MCF 10A (cell line): ENCODE measurements at regions of chr11 and their contacts with region 1.

Region 1: DNA sequence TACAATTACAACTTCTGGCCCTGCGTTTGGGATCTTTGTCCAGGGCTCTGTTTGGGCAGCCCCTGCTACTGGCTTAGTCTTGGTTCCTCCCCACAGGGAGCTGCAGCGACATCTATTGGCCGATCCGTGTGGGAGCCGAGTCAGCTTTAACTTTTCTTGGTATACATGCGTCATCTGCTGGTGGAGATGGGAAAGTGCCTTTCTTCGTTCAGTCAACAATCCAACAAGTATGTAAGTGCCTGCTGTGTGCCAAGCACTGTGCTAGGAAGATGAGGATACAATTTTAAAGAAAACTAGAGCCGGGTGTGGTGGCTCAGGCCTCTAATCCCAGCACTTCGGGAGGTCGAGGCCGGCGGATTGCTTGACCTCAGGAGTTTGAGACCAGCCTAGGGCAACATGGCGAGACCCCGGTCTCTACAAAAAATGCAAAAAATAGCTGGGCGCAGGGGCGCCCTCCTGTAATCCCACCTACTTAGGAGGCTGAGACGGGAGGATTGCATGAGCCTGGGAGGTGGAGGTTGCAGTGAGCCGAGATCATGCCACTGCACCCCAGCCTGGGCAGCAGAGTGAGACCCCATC is 8.2 kb downstream of the TPBGL start:
- DNase-seq: peak; percentile 86
- H3K4me3 Mint-ChIP-seq: no peak overlapping the region
- H3K27ac Mint-ChIP-seq: no peak overlapping the region
- H3K4me1 Mint-ChIP-seq: no peaks in the 10 kb centered on the region
- H3K27me3 Mint-ChIP-seq: peaks cover 67% of the 10 kb centered on the region
- CTCF ChIP-seq: peak; percentile 99

Region 2: DNA sequence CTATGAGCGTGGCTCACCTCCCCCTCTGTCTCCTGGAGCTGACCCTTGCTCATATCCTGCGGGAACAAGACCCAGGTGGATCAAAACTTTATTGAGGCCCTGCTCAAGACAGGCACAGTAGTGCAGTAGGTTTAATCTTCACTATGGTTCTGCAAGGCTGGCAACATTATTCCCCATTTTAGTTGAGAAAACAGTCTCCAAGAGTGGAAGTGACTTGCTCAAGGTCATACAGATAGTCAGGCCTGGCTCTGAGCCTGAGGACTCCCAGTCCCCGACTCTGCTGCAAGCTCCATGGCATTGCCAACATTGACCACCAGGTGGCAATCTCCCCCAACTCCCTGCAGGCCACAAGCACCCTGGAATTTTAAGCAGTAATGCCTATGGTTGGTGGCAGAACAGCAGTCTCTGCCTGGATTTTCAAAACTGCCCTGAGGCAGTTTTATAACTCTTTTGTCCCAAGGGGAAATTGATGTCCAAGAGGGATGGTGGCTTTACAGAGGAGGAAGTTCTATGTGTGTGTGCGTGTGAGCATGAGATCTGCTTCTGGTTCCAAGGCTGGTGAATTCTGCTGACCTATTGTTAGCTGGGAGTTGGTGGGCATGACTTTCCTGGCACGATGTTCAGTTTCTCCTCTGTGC is 225.9 kb before region 1 on chr11:
- CTCF ChIA-PET with region 1: interaction called, 89 read pairs
- POLR2A ChIA-PET with region 1: no interaction called
- intact Hi-C with region 1: loop called (anchors 1 kb)
- DNase-seq: peak; percentile 76
- H3K4me3 Mint-ChIP-seq: no peak overlapping the region
- H3K27ac Mint-ChIP-seq: no peak overlapping the region
- H3K4me1 Mint-ChIP-seq: no peaks in the 10 kb centered on the region
- H3K27me3 Mint-ChIP-seq: peaks cover 2% of the 10 kb centered on the region
- CTCF ChIP-seq: peak; percentile 97

Region 3: GRCh38 chr11:75069473-75069872 is 179.3 kb before region 1 on chr11:
- CTCF ChIA-PET with region 1: no interaction called
- POLR2A ChIA-PET with region 1: no interaction called
- intact Hi-C with region 1: no loop called
- DNase-seq: no peak
- H3K4me3 Mint-ChIP-seq: no peak overlapping the region
- H3K27ac Mint-ChIP-seq: no peak overlapping the region
- H3K4me1 Mint-ChIP-seq: no peaks in the 10 kb centered on the region
- H3K27me3 Mint-ChIP-seq: peaks cover 87% of the 10 kb centered on the region
- CTCF ChIP-seq: no peak

Region 4: DNA sequence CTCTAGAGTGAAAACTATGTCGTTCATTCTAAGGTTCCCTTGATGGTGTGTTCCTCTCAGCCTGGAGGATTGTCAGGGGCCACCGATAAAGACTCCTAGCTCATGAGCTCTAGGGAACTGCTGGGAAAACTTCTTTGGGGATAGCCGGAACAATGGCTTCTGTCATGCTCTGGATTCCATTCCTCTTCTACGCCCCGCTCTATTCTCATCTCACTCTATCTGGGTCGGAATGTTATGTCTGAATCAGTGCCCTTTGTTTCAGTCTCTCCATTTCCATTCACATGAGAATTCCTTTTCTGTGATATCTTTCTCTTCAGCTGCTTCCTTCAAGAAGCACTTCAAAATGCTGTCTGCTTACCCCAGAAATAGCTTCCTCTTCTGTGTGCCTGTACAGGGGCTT is 114.8 kb before region 1 on chr11:
- CTCF ChIA-PET with region 1: interaction called, 251 read pairs
- POLR2A ChIA-PET with region 1: interaction called, 4 read pairs
- intact Hi-C with region 1: no loop called
- DNase-seq: no peak
- H3K4me3 Mint-ChIP-seq: no peak overlapping the region
- H3K27ac Mint-ChIP-seq: no peak overlapping the region
- H3K4me1 Mint-ChIP-seq: no peaks in the 10 kb centered on the region
- H3K27me3 Mint-ChIP-seq: peaks cover 69% of the 10 kb centered on the region
- CTCF ChIP-seq: no peak

Region 5: DNA sequence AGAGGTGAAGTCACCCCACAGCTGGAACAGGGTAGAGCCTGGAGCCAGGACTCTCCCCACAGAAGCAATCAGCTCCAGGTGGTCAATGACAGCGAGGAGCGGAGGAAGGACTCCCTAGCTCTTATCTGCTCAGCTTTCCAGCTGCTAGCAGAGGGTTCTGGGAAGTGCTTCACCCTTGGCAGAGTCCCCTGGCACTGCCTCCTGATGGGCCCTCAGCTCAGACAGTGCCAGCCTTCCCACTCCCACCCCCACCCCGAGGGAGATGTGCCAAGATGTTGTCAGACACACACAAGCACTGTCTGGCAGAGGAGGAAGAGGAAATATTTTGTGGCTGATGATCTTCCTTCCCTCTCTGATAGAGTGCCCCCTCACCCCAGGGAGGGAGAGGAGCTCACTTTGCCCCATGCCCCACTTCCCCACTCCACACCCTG is 53.6 kb before region 1 on chr11:
- CTCF ChIA-PET with region 1: interaction called, 10 read pairs
- POLR2A ChIA-PET with region 1: no interaction called
- intact Hi-C with region 1: no loop called
- DNase-seq: peak; percentile 49
- H3K4me3 Mint-ChIP-seq: no peak overlapping the region
- H3K27ac Mint-ChIP-seq: no peak overlapping the region
- H3K4me1 Mint-ChIP-seq: peaks cover 5% of the 10 kb centered on the region
- H3K27me3 Mint-ChIP-seq: peaks cover 14% of the 10 kb centered on the region
- CTCF ChIP-seq: no peak

Region 6: DNA sequence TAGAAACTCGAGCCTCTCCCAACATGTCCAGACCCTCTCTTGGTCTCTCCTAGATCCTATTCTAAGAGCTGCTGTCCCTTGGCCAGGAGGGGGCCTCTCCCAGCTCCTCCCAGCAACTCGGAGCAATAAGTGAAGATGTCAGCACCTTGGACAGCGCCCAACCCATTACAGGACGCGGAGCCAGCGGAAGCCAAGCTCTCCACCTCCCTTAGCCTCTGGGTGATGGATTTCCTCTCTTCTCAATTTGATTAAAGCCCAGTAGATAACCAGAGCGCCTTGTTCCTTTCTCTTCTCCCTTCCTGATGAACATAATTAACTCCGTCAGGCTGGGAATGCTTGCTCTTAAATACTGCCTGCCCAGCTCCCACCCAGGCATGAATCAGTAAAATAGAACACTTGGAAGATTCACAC is 34.4 kb before region 1 on chr11:
- CTCF ChIA-PET with region 1: interaction called, 6 read pairs
- POLR2A ChIA-PET with region 1: no interaction called
- intact Hi-C with region 1: loop called (anchors 1 kb)
- DNase-seq: peak; percentile 84
- H3K4me3 Mint-ChIP-seq: no peak overlapping the region
- H3K27ac Mint-ChIP-seq: no peak overlapping the region
- H3K4me1 Mint-ChIP-seq: no peaks in the 10 kb centered on the region
- H3K27me3 Mint-ChIP-seq: peaks cover 60% of the 10 kb centered on the region
- CTCF ChIP-seq: no peak

Region 7: GRCh38 chr11:75263944-75264349 is 15.2 kb after region 1 on chr11:
- CTCF ChIA-PET with region 1: interaction called, 29 read pairs
- POLR2A ChIA-PET with region 1: no interaction called
- intact Hi-C with region 1: no loop called
- DNase-seq: peak; percentile 47
- H3K4me3 Mint-ChIP-seq: no peak overlapping the region
- H3K27ac Mint-ChIP-seq: no peak overlapping the region
- H3K4me1 Mint-ChIP-seq: no peaks in the 10 kb centered on the region
- H3K27me3 Mint-ChIP-seq: peaks cover 11% of the 10 kb centered on the region
- CTCF ChIP-seq: no peak